Activated CD4-positive, alpha-beta memory T cell treated with anti-CD3 and anti-CD28 coated beads for 36 hours (primary cell): ENCODE measurements at regions of chr11 and their contacts with region 1.

Region 1: GRCh38 chr11:96389720-96390487 is at the starts of genes CCDC82 and JRKL:
- DNase-seq: peak; percentile 99
- H3K4me3 Mint-ChIP-seq: peak within 1 kb of the TSS; percentile 86
- H3K27ac Mint-ChIP-seq: peak within 1 kb of the TSS; percentile 85
- H3K4me1 Mint-ChIP-seq: peaks cover 67% of the 10 kb centered on the region
- H3K27me3 Mint-ChIP-seq: no peaks in the 10 kb centered on the region
- total RNA-seq, gene CCDC82: 30.6 to 35.3 TPM
- total RNA-seq, gene JRKL: 13.7 to 15.4 TPM

Region 2: GRCh38 chr11:95067039-95067840 is 1322.7 kb before region 1 on chr11:
- CTCF ChIA-PET with region 1: no interaction called
- POLR2A ChIA-PET with region 1: interaction called, 5 read pairs
- intact Hi-C with region 1: loop called (anchors 10 kb)
- DNase-seq: peak; percentile 85
- H3K4me3 Mint-ChIP-seq: peak overlapping the region; percentile 87
- H3K27ac Mint-ChIP-seq: peak overlapping the region; percentile 97
- H3K4me1 Mint-ChIP-seq: peaks cover 24% of the 10 kb centered on the region
- H3K27me3 Mint-ChIP-seq: no peaks in the 10 kb centered on the region

Region 3: GRCh38 chr11:95835768-95836488 is 554.0 kb before region 1 on chr11:
- CTCF ChIA-PET with region 1: interaction called, 38 read pairs
- POLR2A ChIA-PET with region 1: no interaction called
- intact Hi-C with region 1: loop called (anchors 1 kb)
- DNase-seq: peak; percentile 63
- H3K4me3 Mint-ChIP-seq: no peak overlapping the region
- H3K27ac Mint-ChIP-seq: no peak overlapping the region
- H3K4me1 Mint-ChIP-seq: peaks cover 3% of the 10 kb centered on the region
- H3K27me3 Mint-ChIP-seq: no peaks in the 10 kb centered on the region

Region 4: DNA sequence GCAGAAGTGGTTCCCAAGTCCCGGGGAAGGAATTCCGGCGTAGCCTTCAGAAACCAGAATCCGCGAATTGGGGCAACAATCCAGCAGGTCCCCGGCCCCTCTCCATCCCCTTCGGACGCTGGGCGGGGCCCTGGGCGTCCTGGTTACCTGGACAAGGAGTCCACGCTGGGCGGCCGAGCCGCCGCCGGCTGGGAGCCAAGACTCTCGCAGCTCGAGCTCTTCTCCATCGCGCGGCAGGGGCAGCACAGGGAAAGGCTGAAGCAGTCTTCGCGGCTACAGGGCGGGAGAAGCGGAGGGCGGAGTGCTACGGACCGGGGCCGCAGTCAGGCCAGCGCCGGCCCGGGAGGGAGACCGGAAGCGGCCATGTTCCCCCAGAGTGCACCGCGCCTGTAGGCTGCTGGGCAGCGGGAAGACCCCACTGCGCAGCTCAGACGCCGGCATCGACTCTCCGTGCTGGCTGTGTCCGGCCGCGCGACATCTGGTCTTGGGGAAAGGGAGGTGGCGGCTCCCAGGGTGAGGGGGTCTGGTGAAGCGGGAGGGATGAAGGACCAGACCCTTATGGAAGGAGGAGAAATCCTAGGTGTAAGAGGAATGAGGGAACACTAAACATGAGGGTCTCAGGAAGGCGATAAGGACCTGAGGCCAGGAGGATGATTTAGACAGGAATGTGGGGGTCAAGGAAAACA is 466.0 kb before region 1 on chr11 and contains the start of gene MTMR2:
- CTCF ChIA-PET with region 1: interaction called, 3 read pairs
- POLR2A ChIA-PET with region 1: no interaction called
- intact Hi-C with region 1: loop called (anchors 2 kb)
- DNase-seq: peak; percentile 72
- H3K4me3 Mint-ChIP-seq: peak within 1 kb of the TSS; percentile 100
- H3K27ac Mint-ChIP-seq: peak within 1 kb of the TSS; percentile 99
- H3K4me1 Mint-ChIP-seq: peaks cover 30% of the 10 kb centered on the region
- H3K27me3 Mint-ChIP-seq: no peaks in the 10 kb centered on the region
- total RNA-seq, gene MTMR2: 36.9 to 37.8 TPM

Region 5: DNA sequence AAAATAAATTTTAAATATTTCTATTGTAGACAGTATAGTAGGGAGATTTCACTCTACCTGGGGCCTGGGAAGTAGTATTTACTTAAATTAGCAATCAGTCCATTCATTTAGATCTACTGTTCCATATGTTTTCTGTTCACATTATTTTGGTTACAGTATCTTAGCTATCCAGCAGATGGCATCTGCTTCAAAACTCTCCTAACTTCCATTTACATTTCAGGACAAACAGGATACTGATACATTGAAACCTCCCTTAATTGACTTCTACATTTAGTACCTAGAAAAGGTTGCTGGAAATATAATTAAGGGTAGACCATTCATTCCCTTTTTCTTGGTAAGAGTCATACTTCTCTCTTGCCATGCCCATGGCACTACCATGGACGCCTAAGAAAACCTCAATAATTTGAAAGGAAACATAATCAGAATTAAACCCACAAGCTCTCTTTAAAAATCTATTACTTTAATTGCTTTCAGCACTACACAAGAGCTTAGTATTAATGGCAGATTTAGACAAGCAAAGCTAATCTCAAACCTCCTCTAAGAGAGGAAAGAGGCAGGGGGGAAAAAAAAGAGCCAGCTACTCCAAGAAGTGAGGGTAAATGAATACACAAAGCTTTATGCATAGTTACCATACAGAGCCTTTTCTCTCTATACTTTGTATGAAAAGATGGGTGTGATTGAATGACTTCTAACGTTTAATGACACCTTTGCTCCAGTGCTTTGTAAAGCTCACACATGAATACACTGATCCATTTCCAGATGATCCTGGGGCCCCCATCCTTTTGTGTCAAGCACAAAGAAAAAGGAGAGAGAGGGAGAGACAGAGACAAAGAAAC is 334.8 kb before region 1 on chr11:
- CTCF ChIA-PET with region 1: interaction called, 23 read pairs
- POLR2A ChIA-PET with region 1: no interaction called
- intact Hi-C with region 1: loop called (anchors 2 kb)
- DNase-seq: no peak
- H3K4me3 Mint-ChIP-seq: no peak overlapping the region
- H3K27ac Mint-ChIP-seq: peak overlapping the region; percentile 75
- H3K4me1 Mint-ChIP-seq: peaks cover 82% of the 10 kb centered on the region
- H3K27me3 Mint-ChIP-seq: no peaks in the 10 kb centered on the region

Region 6: GRCh38 chr11:96091476-96091875 is 298.4 kb before region 1 on chr11:
- CTCF ChIA-PET with region 1: interaction called, 5 read pairs
- POLR2A ChIA-PET with region 1: no interaction called
- intact Hi-C with region 1: loop called (anchors 2 kb)
- DNase-seq: no peak
- H3K4me3 Mint-ChIP-seq: no peak overlapping the region
- H3K27ac Mint-ChIP-seq: peak overlapping the region; percentile 73
- H3K4me1 Mint-ChIP-seq: peaks cover 53% of the 10 kb centered on the region
- H3K27me3 Mint-ChIP-seq: no peaks in the 10 kb centered on the region

Region 7: GRCh38 chr11:96254087-96254486 is 135.8 kb before region 1 on chr11:
- CTCF ChIA-PET with region 1: interaction called, 4 read pairs
- POLR2A ChIA-PET with region 1: no interaction called
- intact Hi-C with region 1: loop called (anchors 5 kb)
- DNase-seq: peak; percentile 48
- H3K4me3 Mint-ChIP-seq: peak overlapping the region; percentile 46
- H3K27ac Mint-ChIP-seq: peak overlapping the region; percentile 71
- H3K4me1 Mint-ChIP-seq: peaks cover 84% of the 10 kb centered on the region
- H3K27me3 Mint-ChIP-seq: no peaks in the 10 kb centered on the region

Region 8: GRCh38 chr11:96447208-96448110 is 57.6 kb after region 1 on chr11:
- CTCF ChIA-PET with region 1: no interaction called
- POLR2A ChIA-PET with region 1: no interaction called
- intact Hi-C with region 1: no loop called
- DNase-seq: no peak
- H3K4me3 Mint-ChIP-seq: no peak overlapping the region
- H3K27ac Mint-ChIP-seq: no peak overlapping the region
- H3K4me1 Mint-ChIP-seq: no peaks in the 10 kb centered on the region
- H3K27me3 Mint-ChIP-seq: peaks cover 8% of the 10 kb centered on the region